CD4-positive, alpha-beta memory T cell (primary cell): ENCODE measurements at regions of chr7 and their contacts with region 1.

Region 1: GRCh38 chr7:52973126-52973525 is 62.3 kb upstream of the POM121L12 start:
- DNase-seq: no peak
- H3K4me3 ChIP-seq: no peak overlapping the region
- H3K4me3 Mint-ChIP-seq: no peak overlapping the region
- H3K27ac ChIP-seq: no peak overlapping the region
- H3K27ac Mint-ChIP-seq: no peak overlapping the region
- H3K4me1 ChIP-seq: no peaks in the 10 kb centered on the region
- H3K4me1 Mint-ChIP-seq: no peaks in the 10 kb centered on the region
- H3K27me3 ChIP-seq: no peaks in the 10 kb centered on the region
- H3K27me3 Mint-ChIP-seq: no peaks in the 10 kb centered on the region

Region 2: DNA sequence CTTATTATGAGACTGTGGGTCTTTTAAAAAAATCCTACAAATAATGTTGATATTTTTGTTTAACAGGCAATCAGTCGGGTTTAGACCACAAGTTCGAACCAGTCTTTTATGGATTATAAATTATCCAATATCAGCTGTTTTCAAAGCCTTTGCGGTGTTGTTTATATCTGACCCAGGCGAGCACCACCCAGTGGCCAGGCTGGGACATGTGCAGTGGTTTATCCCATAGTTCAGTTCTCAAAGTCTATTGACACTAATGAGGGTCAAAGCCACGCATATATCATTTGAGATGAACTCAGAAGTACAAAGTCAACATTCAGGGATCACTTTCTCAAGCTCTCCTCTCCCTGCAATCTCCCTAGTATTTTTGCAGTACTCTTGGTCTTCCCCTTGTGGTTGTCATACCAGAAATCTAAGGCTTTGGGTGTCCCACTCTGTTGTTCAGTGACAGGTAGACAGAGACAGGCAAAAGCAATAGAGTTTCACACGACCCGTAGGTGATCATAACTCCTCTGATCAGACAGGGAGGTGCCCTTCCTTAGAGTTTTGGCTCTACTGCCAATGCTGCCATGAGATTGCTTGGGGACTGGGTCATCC is 55.0 kb before region 1 on chr7:
- CTCF ChIA-PET with region 1: no interaction called
- POLR2A ChIA-PET with region 1: no interaction called
- intact Hi-C with region 1: loop called (anchors 10 kb)
- DNase-seq: no peak
- H3K4me3 ChIP-seq: no peak overlapping the region
- H3K4me3 Mint-ChIP-seq: no peak overlapping the region
- H3K27ac ChIP-seq: no peak overlapping the region
- H3K27ac Mint-ChIP-seq: no peak overlapping the region
- H3K4me1 ChIP-seq: no peaks in the 10 kb centered on the region
- H3K4me1 Mint-ChIP-seq: no peaks in the 10 kb centered on the region
- H3K27me3 ChIP-seq: no peaks in the 10 kb centered on the region
- H3K27me3 Mint-ChIP-seq: no peaks in the 10 kb centered on the region

Region 3: DNA sequence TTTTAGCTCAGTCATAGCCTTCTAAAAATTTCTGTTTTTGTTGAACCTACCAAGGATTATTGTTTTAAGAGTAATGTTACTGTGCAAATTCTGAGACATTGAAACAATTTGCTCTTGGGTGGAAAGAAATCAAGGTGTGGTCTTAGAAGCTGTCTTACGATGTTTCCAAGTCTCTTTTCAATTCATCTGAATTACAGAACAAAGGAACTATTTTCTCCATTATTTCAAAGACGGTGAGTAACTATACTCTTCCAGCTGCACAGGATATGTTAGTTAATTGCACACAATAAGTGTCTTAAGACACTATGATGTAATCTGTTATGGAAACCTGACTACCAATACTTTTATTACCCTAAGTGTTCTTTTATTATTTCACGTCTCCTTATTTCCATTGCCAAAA is 44.5 kb before region 1 on chr7:
- CTCF ChIA-PET with region 1: no interaction called
- POLR2A ChIA-PET with region 1: no interaction called
- intact Hi-C with region 1: no loop called
- DNase-seq: no peak
- H3K4me3 ChIP-seq: no peak overlapping the region
- H3K4me3 Mint-ChIP-seq: no peak overlapping the region
- H3K27ac ChIP-seq: no peak overlapping the region
- H3K27ac Mint-ChIP-seq: no peak overlapping the region
- H3K4me1 ChIP-seq: no peaks in the 10 kb centered on the region
- H3K4me1 Mint-ChIP-seq: no peaks in the 10 kb centered on the region
- H3K27me3 ChIP-seq: no peaks in the 10 kb centered on the region
- H3K27me3 Mint-ChIP-seq: no peaks in the 10 kb centered on the region